ENCODE measurements at regions of chr10 and their contacts with region 1.

Region 1: GRCh38 chr10:78010278-78010677 is 19.0 kb downstream of the POLR3A start:
- DNase-seq: no peak
- ATAC-seq: no peak
- H3K4me3 ChIP-seq: no peak overlapping the region
- H3K27ac ChIP-seq: no peak overlapping the region
- H3K4me1 ChIP-seq: peaks cover 10% of the 10 kb centered on the region; the same call in 2 of the 3 replicates
- CTCF ChIP-seq: no peak
- EP300 ChIP-seq: no peak
- POLR2A ChIP-seq: no peak
- RAD21 ChIP-seq: no peak

Region 2: DNA sequence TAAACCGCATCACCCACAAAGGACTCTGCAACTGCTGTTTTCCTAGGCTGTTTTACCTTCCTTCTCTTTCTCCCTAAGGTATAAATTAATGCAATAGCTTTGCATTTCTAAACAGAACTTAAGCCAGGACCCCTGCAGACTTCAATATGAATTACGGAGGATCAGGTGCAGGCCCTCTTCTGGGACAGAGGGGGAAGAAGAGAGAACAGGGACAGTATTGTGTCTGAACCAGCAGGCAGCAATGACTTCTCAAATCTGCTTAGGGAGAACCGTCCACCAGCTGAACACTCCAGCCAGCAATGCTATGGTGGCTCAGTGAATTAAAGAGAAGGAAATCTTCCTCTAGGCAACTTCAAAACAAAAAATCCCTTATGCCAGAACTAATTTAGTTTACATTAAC is 16.7 kb before region 1 on chr10:
- CTCF ChIA-PET with region 1: no interaction called
- POLR2A ChIA-PET with region 1: no interaction called
- DNase-seq: no peak
- ATAC-seq: no peak
- H3K4me3 ChIP-seq: no peak overlapping the region
- H3K27ac ChIP-seq: no peak overlapping the region
- H3K4me1 ChIP-seq: no peaks in the 10 kb centered on the region
- CTCF ChIP-seq: no peak
- EP300 ChIP-seq: no peak
- POLR2A ChIP-seq: no peak
- RAD21 ChIP-seq: no peak

Region 3: GRCh38 chr10:78029269-78030226 is 19.3 kb after region 1 on chr10 and contains the start of gene POLR3A:
- CTCF ChIA-PET with region 1: interaction called, 12 read pairs
- POLR2A ChIA-PET with region 1: no interaction called
- DNase-seq: peak; percentile 94 to 99
- ATAC-seq: peak; percentile 77 to 82
- H3K4me3 ChIP-seq: peak within 1 kb of the TSS; percentile 81
- H3K27ac ChIP-seq: peak within 1 kb of the TSS; percentile 87 to 95
- H3K4me1 ChIP-seq: peaks cover 7% of the 10 kb centered on the region; the same call in 2 of the 3 replicates
- CTCF ChIP-seq: peak; percentile 92
- EP300 ChIP-seq: no peak
- POLR2A ChIP-seq: peak; percentile 74
- RAD21 ChIP-seq: peak; percentile 44 to 62; a peak in 4 of 5 replicates
- polyA plus RNA-seq, gene POLR3A: 17.7 and 19.0 TPM in 2 replicates